Aorta (tissue), 5 donors: ENCODE measurements at regions of chr19 and their contacts with region 1.

Region 1: DNA sequence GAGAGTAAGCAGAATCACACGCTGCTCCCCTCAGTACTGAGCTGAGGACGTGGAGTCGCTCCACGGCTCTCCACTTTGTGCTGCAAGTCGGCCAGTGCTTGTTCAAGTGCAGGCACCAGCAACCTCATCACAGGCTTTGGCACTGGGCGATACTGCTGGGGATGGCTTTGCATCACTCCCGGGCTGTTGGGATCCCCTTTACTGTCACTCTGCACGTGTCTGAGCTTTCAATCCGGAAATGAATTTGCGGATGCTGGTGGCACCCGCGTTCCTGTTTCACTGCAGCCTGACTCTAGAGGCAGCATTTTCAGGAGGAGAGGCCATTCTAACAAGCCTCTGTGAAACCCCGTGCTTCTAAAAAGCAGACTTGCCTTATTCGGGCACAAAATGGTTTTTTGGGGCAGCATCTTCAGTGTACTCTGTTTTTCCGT is 19.1 kb downstream of the SMARCA4 start:
- DNase-seq: no peak
- ATAC-seq: no peak
- H3K4me3 ChIP-seq: no peak overlapping the region
- H3K27ac ChIP-seq: peak overlapping the region in 1 of 2 donors; percentile 49
- H3K4me1 ChIP-seq: peaks cover 0 to 3% of the 10 kb centered on the region in 2 donors
- H3K27me3 ChIP-seq: no peaks in the 10 kb centered on the region

Region 2: DNA sequence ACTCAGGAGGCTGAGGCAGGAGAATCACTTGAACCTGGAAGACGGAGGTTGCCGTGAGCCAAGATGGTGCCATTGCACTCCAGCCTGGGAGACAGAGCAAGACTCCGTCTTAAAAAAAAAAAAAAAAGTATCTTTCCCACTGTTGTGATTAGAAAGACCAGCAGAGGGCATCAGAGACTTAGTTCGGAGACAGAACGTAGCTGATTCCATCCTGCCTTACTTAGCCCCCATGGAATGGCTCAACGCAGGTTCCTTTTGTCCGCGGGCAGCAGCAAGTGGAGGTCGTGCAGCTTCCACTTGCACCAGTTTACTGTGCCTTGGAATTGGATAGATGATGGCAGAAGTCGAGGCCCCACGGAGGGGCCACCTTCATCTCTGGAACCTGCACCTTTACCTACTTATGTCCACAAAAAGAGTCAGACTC is 43.3 kb before region 1 on chr19:
- intact Hi-C with region 1: loop called in 1 of 2 experiments (anchors 5 kb)
- DNase-seq: no peak
- ATAC-seq: peak; percentile 73
- H3K4me3 ChIP-seq: no peak overlapping the region
- H3K27ac ChIP-seq: no peak overlapping the region
- H3K4me1 ChIP-seq: no peaks in the 10 kb centered on the region
- H3K27me3 ChIP-seq: no peaks in the 10 kb centered on the region

Region 3: GRCh38 chr19:10960314-10961072 is 19.5 kb before region 1 on chr19 and contains the start of gene SMARCA4:
- intact Hi-C with region 1: loop called in 1 of 2 experiments (anchors 1 kb)
- DNase-seq: peak; percentile 98 to 99
- ATAC-seq: peak; percentile 97
- H3K4me3 ChIP-seq: peak within 1 kb of the TSS; percentile 50 to 94
- H3K27ac ChIP-seq: peak within 1 kb of the TSS in 1 of 2 donors; percentile 72
- H3K4me1 ChIP-seq: no peaks in the 10 kb centered on the region
- H3K27me3 ChIP-seq: no peaks in the 10 kb centered on the region
- total RNA-seq, gene SMARCA4: 65.0 to 67.4 TPM

Region 4: DNA sequence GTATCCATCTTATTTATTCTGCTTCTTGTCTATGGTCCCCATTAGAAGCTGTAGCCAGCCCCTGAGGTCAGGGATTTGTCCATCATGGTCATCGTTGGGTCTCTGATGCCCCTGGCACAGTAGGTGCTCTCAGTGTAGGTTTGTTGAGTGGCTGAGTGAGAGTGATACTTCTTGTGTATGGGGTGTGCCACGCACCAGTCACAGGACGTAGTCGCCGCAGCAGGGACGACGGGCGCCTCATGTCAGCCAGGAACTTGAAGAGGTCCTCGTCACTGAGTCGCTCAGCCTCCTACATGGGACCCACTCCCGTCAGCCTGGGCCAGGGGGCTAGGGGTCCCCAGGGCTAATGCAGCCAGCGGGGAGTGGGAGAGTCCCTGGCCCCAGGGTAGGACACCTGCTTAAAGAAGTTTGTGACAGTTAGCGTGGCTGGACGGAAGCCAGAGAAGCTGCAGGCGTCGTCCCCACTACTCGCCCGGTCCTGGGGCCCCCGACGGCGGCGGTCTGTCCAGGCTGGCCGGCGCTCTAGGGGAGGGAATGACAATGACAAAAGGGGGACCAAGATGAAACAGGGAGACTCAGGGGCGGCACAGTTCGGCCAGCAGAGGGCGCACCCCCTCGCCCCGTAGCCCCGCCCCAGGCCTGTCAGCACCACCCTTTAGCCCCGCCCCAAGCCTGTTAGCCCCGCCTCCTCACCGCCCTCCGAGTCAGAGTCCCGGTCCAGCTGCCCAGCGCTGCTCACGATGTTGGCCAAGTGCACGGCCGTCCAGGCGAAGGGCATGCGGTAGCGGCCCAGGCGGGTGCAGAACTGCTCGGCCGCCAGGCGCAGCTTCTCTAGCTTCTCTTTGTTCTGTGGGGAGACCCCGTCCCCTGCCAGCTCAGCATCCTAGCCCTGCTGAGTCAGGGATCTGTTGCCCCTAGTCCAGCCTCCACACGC is 263.2 kb after region 1 on chr19:
- intact Hi-C with region 1: no loop called
- DNase-seq: peak; percentile 96 to 98
- ATAC-seq: peak; percentile 94
- H3K4me3 ChIP-seq: no peak overlapping the region
- H3K27ac ChIP-seq: no peak overlapping the region
- H3K4me1 ChIP-seq: no peaks in the 10 kb centered on the region
- H3K27me3 ChIP-seq: no peaks in the 10 kb centered on the region